ENCODE measurements at regions of chr19 and their contacts with region 1.

Region 1: GRCh38 chr19:12440541-12441316 is at the start of gene ZNF443:
- DNase-seq: peak; percentile 96 to 100 (median 99)
- H3K4me3 ChIP-seq: peak within 1 kb of the TSS; percentile 43 to 92 (median 70)
- H3K27ac ChIP-seq: peak within 1 kb of the TSS in 35 of 59 donors; percentile 9 to 82 (median 56)
- H3K27me3 ChIP-seq: no peaks in the 10 kb centered on the region
- CTCF ChIP-seq: peak in 6 of 56 donors; percentile 5 to 15 (median 12)
- total RNA-seq, gene ZNF443: 2.2 to 9.7 (median 5.7) TPM

Region 2: DNA sequence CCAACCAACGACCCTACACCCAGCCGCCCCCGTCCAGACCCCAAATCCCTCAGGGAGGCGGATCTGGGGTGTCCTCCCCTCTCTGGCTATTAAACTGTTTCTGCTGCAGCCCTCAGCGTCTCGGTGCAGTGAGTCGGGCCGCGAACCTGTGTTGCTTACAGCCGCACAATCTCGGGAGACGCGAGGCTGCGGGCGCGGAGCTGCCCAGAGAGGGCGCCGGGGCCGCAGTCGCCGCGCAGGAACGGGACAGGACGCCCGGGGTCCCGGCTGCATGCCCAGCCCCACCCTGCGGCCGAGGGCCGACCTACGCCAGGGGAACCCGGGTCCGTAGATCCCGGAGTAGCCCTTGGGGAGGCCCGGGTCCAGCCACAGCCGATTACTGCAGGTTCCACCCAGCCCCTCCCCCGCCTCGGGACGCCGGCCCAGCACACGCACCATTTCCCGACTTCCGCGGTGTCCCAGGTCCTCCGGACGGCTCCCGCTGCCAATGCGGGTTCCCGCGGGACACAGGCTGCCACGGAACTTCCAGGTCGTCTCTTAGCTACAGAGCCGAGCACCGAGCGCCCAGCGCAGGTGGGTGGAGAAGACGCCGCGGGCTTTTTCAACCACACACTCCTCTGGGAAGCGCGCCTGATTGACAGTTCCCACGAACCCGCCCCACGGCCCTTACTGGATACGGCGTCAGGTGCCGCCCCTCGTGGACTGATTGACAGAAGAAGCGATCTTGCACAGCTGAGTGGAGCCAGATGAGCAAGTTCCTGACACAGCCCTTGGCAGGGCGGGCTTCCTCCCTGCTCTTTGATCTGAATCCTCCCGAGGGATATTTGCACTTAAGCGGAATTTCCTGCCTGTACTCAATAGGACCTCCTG is 39.9 kb before region 1 on chr19 and contains the start of gene ZNF799:
- intact Hi-C with region 1: loop called in 1 of 2 experiments (anchors 5 kb)
- DNase-seq: peak; percentile 96 to 99 (median 99)
- H3K4me3 ChIP-seq: peak within 1 kb of the TSS; percentile 35 to 92 (median 82)
- H3K27ac ChIP-seq: peak within 1 kb of the TSS in 55 of 59 donors; percentile 14 to 90 (median 73)
- H3K27me3 ChIP-seq: no peaks in the 10 kb centered on the region
- CTCF ChIP-seq: peak in 23 of 56 donors; percentile 10 to 52 (median 17)
- total RNA-seq, gene ZNF799: 2.2 to 7.1 (median 4.3) TPM

Region 3: GRCh38 chr19:12484371-12485051 is 43.8 kb after region 1 on chr19 and contains the start of gene ZNF709:
- intact Hi-C with region 1: loop called in 1 of 2 experiments (anchors 2 kb)
- DNase-seq: peak; percentile 78 to 95 (median 92)
- H3K4me3 ChIP-seq: peak within 1 kb of the TSS; percentile 50 to 99 (median 94)
- H3K27ac ChIP-seq: peak within 1 kb of the TSS in 55 of 59 donors; percentile 4 to 90 (median 77)
- H3K27me3 ChIP-seq: no peaks in the 10 kb centered on the region
- CTCF ChIP-seq: peak in 12 of 56 donors; percentile 7 to 34 (median 17)
- total RNA-seq, gene ZNF709: 4.7 to 18.1 (median 9.9) TPM

Region 4: GRCh38 chr19:12495002-12495802 is 54.5 kb after region 1 on chr19:
- intact Hi-C with region 1: loop called in 1 of 2 experiments (anchors 2 kb)
- DNase-seq: peak; percentile 93 to 98 (median 97)
- H3K4me3 ChIP-seq: peak overlapping the region; percentile 61 to 96 (median 79)
- H3K27ac ChIP-seq: peak overlapping the region; percentile 22 to 98 (median 90)
- H3K27me3 ChIP-seq: no peaks in the 10 kb centered on the region
- CTCF ChIP-seq: peak in 55 of 56 donors; percentile 21 to 88 (median 67)

Measured in dorsolateral prefrontal cortex (tissue), 120 donors.